Sigmoid colon (tissue), 7 donors: ENCODE measurements at regions of chr16 and their contacts with region 1.

Region 1: DNA sequence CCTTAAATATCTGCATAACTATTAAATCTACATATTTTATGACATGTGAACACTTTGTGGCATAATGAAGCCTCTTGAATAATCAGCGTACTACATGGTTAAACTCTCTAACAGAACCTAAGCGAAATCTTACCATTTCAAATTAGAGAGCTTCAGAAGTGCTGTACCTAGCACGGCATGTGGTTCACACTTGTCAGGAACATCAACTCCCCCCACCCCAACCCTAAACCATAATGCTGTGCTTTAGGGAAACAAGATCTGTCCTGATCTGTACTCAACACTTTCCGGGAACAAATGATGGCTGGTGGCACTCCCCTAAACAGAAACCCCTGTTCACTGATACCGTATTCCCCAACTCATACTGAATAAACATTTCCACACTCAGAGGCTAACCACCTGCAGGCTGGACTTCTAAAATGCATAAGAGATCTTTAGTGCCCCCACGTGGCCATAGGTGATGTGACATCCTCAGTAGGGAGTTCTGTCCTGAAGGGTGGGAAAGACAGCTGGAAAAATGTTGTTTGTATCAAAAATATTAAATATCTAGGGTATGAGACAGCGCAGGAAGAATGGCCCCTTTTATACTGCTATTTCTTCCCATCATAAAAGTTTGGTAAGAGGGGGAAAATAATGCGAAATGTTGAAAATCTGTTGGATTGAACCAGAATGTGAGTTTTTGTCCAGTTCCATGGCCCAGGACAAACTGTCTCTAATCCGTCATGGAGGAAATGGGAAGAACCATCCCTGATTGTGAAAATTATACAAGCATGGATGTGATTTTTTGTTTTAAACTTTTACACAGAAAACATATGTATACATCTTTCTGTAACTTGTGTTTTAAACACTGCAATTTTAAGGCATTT is 88.6 kb downstream of the USP31 start:
- DNase-seq: peak; percentile 85
- H3K4me3 ChIP-seq: no peak overlapping the region
- H3K27ac ChIP-seq: no peak overlapping the region
- H3K4me1 ChIP-seq: peaks cover 0 to 16% (median 9%) of the 10 kb centered on the region in 4 donors
- H3K27me3 ChIP-seq: no peaks in the 10 kb centered on the region
- CTCF ChIP-seq: peak; percentile 34 to 82 (median 67)
- EP300 ChIP-seq: no peak
- POLR2A ChIP-seq: no peak

Region 2: GRCh38 chr16:22898874-22899348 is 161.8 kb before region 1 on chr16:
- intact Hi-C with region 1: loop called (anchors 2 kb)
- DNase-seq: peak; percentile 81
- H3K4me3 ChIP-seq: no peak overlapping the region
- H3K27ac ChIP-seq: no peak overlapping the region
- H3K4me1 ChIP-seq: peaks cover 0 to 9% (median 4%) of the 10 kb centered on the region in 4 donors
- H3K27me3 ChIP-seq: peaks cover 0 to 35% (median 0%) of the 10 kb centered on the region in 3 donors
- CTCF ChIP-seq: peak; percentile 33 to 67 (median 60)
- EP300 ChIP-seq: no peak
- POLR2A ChIP-seq: no peak

Region 3: DNA sequence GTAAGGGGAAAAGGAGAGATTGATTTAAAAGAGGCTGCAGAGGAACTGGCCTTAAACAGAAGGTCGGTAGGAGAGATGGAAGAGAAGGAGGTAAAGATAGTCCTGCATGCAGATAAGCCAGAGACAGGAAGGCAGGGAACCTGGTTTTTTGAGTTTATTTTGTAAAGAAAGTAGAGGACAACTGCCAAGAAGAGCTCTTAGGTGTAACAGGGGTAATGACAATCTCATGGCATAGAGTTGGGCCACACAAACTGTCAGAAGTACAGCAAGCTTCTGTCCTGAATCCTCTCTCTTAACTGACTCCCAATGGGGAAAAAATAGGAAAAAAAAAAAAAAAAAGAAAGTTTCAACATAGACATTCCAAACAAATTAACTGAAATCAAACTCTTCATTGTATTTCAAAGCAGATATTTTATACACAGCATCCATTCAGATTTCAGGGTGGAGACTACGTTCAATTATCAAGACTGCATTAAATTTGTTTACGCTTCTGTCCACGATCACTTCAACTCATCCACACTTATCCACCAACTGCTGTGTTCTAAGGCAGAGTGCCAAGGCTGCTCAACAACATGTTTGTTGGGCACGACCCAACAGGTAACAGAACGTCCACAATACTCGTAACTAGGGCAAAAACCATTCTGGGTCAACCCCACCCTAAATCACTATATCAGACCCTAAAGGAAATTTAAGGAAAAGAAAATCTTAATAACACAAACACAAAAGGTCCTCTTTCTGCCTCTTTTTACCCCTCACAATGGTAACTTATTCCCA is 53.6 kb after region 1 on chr16:
- intact Hi-C with region 1: no loop called
- DNase-seq: no peak
- H3K4me3 ChIP-seq: no peak overlapping the region
- H3K27ac ChIP-seq: no peak overlapping the region
- H3K4me1 ChIP-seq: peaks cover 0 to 26% (median 17%) of the 10 kb centered on the region in 4 donors
- H3K27me3 ChIP-seq: no peaks in the 10 kb centered on the region
- CTCF ChIP-seq: no peak
- EP300 ChIP-seq: no peak
- POLR2A ChIP-seq: no peak

Region 4: DNA sequence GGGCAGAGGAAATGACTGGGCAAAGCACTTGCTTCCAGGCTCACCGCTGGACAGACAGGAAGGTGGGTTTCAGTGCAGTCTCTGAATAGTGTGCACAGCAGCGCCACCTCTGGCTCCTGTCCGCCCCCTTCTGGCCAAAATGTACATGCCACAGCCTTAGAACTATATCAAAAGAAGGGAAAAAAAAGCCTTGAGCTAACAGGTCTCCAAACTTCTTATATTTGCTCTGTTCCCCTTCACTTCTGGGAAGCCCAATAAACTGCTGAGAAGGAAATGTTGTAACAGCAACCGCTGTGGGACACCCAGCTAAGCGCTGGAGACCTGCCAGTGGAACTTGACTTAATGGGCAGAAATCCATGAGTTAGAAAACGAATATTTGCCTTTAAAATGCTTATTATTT is 374.8 kb after region 1 on chr16:
- intact Hi-C with region 1: loop called (anchors 10 kb)
- DNase-seq: peak; percentile 74
- H3K4me3 ChIP-seq: no peak overlapping the region
- H3K27ac ChIP-seq: no peak overlapping the region
- H3K4me1 ChIP-seq: peaks cover 0 to 9% (median 7%) of the 10 kb centered on the region in 4 donors
- H3K27me3 ChIP-seq: no peaks in the 10 kb centered on the region
- CTCF ChIP-seq: peak; percentile 65 to 80 (median 75)
- EP300 ChIP-seq: no peak
- POLR2A ChIP-seq: no peak